ENCODE measurements at regions of chr15 and their contacts with region 1.

Region 1: GRCh38 chr15:70636540-70637165 is 126.7 kb downstream of the UACA start:
- DNase-seq: no peak
- H3K4me3 ChIP-seq: no peak overlapping the region
- H3K27ac ChIP-seq: no peak overlapping the region
- H3K4me1 ChIP-seq: peaks cover 14 to 27% (median 17%) of the 10 kb centered on the region in 4 experiments
- H3K27me3 ChIP-seq: peaks cover 0 to 2% (median 0%) of the 10 kb centered on the region in 4 experiments; a peak in 1 of 7 replicates
- CTCF ChIP-seq: peak; percentile 35 to 71 (median 66)
- EP300 ChIP-seq: no peak
- POLR2A ChIP-seq: no peak
- RAD21 ChIP-seq: peak; percentile 78 to 84

Region 2: DNA sequence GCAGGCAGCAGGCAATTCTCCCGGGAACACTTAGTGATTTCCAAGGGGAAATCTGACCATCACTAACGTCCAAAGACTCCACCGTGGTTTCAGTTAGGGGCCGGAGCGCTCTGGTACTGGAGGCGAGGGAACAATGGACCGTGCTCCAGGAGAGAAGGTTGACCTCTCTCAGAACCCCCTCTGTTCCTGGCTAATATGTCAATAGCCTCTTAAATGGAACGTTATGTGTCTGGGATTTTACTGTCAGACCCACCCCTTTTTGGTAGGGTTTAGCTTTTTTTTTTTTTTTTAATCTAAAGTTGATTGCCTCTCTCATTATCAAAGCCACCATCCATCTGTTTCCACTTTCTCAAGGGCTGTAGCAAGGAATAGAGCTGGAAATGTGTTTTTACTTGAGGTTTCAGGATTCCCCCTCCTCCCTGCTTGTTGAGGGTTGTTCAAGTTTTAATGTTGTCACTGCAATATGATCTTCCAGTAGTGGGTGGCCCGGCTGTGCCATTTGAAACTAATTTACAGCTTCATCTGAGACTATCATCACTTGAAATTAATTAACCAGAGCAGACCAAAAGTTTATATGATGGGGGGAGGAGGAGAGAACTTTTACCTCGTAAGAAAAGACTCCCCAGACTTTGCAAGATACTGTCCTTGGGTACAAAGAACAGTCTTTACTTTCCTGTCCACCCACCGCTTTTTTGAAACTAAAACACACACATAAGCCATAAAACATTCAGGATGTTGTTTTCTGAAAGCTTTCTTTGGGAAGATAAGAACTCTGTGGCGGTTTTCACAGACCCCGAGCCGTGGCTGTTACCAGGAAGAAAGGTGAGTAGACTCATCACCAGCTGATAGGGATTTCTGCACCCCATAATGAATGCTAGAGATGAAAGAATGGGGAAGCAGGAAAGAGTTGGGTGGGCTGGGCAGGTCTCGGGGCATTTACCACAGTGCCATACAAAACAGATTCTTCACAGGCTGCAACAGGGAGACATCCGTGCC is 61.1 kb before region 1 on chr15:
- CTCF ChIA-PET with region 1: interaction called, 13 read pairs
- POLR2A ChIA-PET with region 1: no interaction called
- DNase-seq: no peak
- H3K4me3 ChIP-seq: no peak overlapping the region
- H3K27ac ChIP-seq: no peak overlapping the region
- H3K4me1 ChIP-seq: peaks cover 0 to 3% (median 0%) of the 10 kb centered on the region in 4 experiments; a peak in 1 of 7 replicates
- H3K27me3 ChIP-seq: 0 out of 7 replicates have a peak, but pooled peaks cover 0 to 2% (median 0%) of the 10 kb centered on the region in 4 experiments
- CTCF ChIP-seq: no peak
- EP300 ChIP-seq: no peak
- POLR2A ChIP-seq: no peak
- RAD21 ChIP-seq: no peak

Region 3: GRCh38 chr15:71093121-71094024 is 456.7 kb after region 1 on chr15:
- CTCF ChIA-PET with region 1: no interaction called
- POLR2A ChIA-PET with region 1: no interaction called
- DNase-seq: peak in 1 of 2 experiments; percentile 16
- H3K4me3 ChIP-seq: no peak overlapping the region
- H3K27ac ChIP-seq: no peak overlapping the region
- H3K4me1 ChIP-seq: no peaks in the 10 kb centered on the region
- H3K27me3 ChIP-seq: no peaks in the 10 kb centered on the region; a peak in 3 of 7 replicates
- CTCF ChIP-seq: no peak
- EP300 ChIP-seq: no peak
- POLR2A ChIP-seq: no peak
- RAD21 ChIP-seq: no peak

Measured in H1 (cell line).